Left ventricle myocardium inferior (tissue), 1 donor: ENCODE measurements at regions of chr16 and their contacts with region 1.

Region 1: DNA sequence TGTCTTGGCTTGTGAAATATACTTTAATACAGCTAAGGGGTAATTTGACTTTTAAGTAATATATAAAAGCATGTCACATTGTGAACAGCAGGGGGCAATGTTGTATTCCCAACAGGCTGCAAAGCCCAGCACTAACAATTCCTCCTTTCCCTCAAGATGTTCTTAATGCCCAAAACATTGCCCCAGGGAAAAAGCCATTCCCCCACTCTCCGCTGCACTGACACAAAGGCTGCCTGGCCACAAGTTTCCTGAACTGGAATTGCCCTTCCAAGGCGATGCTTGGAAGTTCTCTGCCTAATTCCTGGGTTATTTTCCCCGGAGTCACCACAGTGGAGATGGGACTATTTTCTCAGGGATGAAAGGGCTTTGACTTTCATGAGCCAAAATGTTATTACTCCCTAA is 27.2 kb downstream of the CLEC16A start:
- DNase-seq: no peak
- H3K4me3 ChIP-seq: no peak overlapping the region
- H3K27ac ChIP-seq: no peak overlapping the region
- H3K4me1 ChIP-seq: peaks cover 28% of the 10 kb centered on the region
- H3K27me3 ChIP-seq: no peaks in the 10 kb centered on the region
- CTCF ChIP-seq: peak; percentile 84

Region 2: DNA sequence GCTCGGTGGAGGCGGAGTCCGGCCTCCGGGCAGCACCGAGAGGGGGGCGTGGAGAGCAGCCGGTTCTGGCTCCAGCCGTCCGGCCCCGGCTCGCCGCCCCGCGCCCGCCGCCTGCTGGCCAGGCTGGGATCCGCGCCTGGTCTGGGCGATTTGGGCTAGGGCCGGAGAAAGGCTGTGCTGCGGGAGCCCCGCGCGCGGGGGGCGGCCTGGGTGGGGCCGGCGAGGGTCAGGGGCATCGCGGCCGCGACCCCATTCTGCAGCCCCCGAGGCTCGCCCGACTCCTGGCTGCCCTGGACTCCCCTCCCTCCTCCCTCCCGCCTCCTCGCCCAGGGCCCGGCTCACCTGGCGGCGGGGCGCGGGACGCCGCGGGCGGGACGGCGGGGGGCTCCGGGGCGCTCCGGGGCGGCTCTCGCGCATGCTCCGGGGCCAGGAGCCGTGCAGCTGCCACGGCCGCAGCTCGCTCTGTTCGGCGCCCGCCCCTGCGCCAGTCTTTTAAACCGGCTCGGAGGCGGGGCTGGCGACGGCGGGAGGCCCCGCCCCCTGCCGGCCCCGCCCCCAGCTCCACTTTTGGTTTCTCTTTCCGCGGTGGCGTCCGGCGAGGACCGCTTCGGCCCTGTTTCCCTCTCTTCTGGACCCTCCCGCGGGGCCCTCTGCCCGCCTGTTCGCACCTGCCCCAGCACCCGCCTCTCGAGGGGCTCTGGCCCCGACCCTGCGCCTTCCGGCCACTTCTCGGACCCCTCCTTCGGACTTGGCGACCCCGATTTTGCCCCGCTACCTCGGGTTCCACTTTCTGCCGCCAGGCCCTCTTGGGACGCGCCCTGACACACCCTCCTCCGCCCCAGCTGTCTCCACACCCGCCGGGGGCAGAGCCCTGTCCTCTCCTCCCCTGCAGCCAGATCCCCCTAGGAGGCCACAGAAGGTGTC is 284.4 kb after region 1 on chr16 and contains the start of gene SOCS1:
- intact Hi-C with region 1: loop called (anchors 5 kb)
- DNase-seq: peak; percentile 87
- H3K4me3 ChIP-seq: peak within 1 kb of the TSS; percentile 90
- H3K27ac ChIP-seq: peak within 1 kb of the TSS; percentile 100
- H3K4me1 ChIP-seq: peaks cover 58% of the 10 kb centered on the region
- H3K27me3 ChIP-seq: no peaks in the 10 kb centered on the region
- CTCF ChIP-seq: peak; percentile 94
- total RNA-seq, gene SOCS1: 2.9 TPM